BJ (cell line): ENCODE measurements at regions of chr17 and their contacts with region 1.

Region 1: DNA sequence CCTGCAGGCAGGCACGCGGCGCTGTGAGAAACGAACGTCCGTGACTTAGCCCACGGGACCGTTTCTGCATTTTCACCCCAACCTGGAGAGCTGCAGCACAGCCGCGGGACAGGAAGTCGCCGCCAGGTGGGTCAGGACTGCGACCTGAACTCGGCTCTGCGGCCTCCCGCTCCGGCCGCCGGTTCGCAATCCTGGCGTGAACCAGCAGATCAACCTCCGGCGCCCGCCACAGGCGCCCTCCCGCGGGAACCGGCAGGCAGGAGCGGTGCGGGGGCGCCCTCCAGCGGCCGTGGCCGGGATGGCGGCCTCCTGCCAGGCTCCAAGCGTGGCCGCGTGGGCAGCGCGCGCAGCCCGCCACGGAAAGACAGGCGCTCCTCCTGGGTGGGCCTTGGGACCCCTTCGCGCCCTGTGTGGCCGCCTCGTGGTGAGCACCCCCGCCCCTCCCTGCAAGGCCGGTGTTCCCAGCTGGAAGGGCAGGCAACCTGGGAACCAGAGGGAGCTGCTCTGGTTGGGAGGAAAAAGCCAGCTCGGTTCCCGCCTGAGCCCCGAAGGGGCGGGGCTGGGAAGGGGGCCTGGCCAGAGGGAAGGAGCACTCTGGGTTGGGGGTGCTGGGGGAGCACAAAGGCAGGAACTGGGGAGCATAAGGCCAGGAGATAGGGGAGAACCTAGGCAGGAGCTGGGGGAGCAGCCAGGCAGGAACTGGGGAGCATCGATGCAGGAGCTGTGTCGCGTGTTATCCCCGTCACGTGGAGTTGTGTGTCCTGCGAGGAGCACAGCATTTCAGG is 28.2 kb downstream of the ACTG1 start:
- DNase-seq: no peak
- H3K4me3 ChIP-seq: peak overlapping the region; percentile 40
- H3K27me3 ChIP-seq: no peaks in the 10 kb centered on the region; the same call in 1 of the 2 replicates
- CTCF ChIP-seq: peak; percentile 36; the same call in 1 of the 2 replicates

Region 2: GRCh38 chr17:81142301-81143199 is 341.8 kb before region 1 on chr17:
- CTCF ChIA-PET with region 1: interaction called, 13 read pairs
- POLR2A ChIA-PET with region 1: no interaction called
- DNase-seq: peak; percentile 9
- H3K4me3 ChIP-seq: no peak overlapping the region
- H3K27me3 ChIP-seq: no peaks in the 10 kb centered on the region
- CTCF ChIP-seq: peak; percentile 80

Region 3: GRCh38 chr17:81253358-81254131 is 230.8 kb before region 1 on chr17:
- CTCF ChIA-PET with region 1: interaction called, 47 read pairs
- POLR2A ChIA-PET with region 1: no interaction called
- DNase-seq: no peak
- H3K4me3 ChIP-seq: no peak overlapping the region
- H3K27me3 ChIP-seq: no peaks in the 10 kb centered on the region
- CTCF ChIP-seq: peak; percentile 73

Region 4: DNA sequence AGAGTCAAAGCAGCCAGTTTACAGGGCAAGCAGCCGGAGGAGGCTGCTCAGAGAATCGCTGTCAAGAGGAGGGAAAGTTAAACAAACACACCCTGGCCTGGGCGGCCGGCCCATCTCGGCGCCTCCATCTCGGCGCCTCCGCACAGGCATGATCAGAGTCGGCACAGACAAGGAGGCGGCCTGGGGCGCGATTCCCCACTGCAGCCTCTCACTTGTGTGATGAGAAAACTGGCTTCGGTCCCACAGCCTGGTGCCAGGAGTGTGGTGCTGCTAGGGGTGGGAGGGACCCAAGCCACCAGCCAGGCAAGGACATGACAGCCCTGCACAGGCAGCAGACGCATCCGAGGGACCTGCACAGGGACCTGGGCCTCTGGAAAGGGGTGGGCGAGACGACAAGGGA is 207.0 kb before region 1 on chr17:
- CTCF ChIA-PET with region 1: no interaction called
- POLR2A ChIA-PET with region 1: no interaction called
- DNase-seq: no peak
- H3K4me3 ChIP-seq: no peak overlapping the region
- H3K27me3 ChIP-seq: no peaks in the 10 kb centered on the region
- CTCF ChIP-seq: no peak

Region 5: DNA sequence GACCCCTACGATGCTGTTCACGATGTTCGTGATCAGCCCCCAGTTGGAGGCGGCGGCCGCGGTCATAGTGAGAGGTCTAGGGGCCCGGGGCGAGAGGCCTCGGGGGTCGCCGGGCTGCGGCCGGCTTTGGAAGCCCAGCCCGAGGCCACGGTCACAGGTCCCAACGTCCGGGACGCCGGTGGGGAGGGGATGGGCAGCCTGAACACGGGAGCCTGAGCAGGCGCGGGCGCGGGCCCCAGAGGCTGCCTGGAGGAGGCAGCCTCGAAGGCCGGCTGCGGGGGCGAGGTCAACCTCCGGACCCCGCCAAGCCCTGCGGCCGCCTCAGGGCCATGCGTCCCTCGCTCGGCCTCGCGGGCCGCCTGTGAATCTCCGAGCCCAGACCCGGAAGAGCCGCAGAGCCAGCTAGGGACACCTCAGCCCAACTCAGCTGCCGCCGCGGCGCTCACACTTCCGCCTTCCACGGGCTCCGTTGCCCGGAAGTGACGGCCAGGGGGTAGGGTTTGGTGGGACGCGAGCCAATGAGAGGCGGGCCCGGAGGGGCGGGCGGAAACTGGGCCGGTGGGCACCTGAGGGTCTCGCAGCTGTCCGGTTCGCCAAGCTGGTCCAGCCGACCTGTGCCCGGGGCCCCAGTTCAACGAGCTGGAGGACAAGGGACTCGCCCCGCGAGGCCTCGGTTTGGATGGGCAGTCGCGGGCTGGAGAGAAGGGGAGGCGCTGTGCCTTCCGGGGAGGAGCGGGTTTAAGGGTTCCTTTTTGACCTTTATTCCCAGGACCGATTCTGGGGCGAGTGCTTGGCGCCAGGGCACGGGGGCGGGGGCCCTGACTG is 189.3 kb before region 1 on chr17 and contains the start of gene SLC38A10:
- CTCF ChIA-PET with region 1: interaction called, 15 read pairs
- POLR2A ChIA-PET with region 1: no interaction called
- DNase-seq: no peak
- H3K4me3 ChIP-seq: peak within 1 kb of the TSS; percentile 92
- H3K27me3 ChIP-seq: no peaks in the 10 kb centered on the region
- CTCF ChIP-seq: peak; percentile 26
- polyA plus RNA-seq, gene SLC38A10: 34.6 and 55.4 TPM in 2 replicates

Region 6: DNA sequence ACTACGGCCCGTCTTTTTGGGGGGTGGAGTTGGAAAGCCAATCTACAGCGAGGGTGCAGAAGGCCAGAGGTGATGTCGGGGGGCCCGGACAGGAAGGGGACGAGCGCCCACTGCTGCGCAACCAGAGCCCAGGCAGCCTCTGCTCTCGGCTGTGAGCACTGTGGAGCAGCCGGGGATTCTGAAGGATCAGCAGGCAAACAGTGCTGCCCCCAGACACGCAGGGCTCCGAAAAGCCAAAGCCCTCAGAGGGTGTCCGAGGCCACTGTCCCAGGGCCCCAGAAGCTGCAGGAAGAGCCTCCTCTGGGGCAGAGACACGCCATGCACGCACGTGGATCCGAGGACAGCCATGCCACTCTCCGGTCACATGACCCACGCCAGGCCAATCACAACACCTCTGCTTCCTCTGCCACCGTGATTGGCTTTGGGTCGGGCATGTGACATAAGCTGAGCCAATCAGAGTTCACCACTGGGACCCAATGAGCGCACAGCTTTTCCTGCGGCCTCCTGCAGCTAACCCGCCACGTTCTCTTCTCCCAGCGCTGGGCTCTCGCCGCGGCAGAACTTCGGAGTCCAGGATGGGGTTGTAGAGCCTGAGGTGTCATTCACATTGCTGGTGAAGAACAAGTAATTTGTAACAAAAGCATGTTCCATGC is 12.5 kb before region 1 on chr17:
- CTCF ChIA-PET with region 1: interaction called, 17 read pairs
- POLR2A ChIA-PET with region 1: no interaction called
- DNase-seq: peak; percentile 76
- H3K4me3 ChIP-seq: peak overlapping the region; percentile 22
- H3K27me3 ChIP-seq: no peaks in the 10 kb centered on the region; the same call in 1 of the 2 replicates
- CTCF ChIP-seq: peak; percentile 77

Region 7: DNA sequence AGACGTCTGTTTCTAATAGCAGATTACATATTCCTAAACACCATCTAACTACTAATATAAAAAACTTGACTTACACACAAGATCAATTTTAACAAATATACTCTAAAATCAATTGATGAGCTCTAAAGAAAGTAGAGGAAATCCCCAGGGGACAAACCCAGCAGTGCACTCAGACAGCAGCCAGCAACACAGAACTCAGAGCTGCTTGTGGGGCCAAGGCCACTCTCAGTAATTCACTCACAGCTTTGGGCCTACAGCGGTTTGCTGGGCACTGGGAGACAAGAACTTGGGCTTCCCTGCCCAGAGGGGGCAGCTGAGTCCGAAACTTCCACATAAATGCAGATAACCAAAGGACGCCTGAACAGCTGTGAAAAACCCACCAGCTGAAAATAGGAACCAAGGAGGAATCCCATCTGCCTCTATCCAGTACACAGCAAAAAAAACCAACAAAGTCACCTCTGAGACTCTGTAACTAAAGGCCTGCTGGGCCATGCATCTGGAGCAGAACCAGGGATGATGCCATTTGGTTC is 131.1 kb after region 1 on chr17:
- CTCF ChIA-PET with region 1: no interaction called
- POLR2A ChIA-PET with region 1: no interaction called
- DNase-seq: no peak
- H3K4me3 ChIP-seq: no peak overlapping the region
- H3K27me3 ChIP-seq: no peaks in the 10 kb centered on the region
- CTCF ChIP-seq: no peak